HepG2 (cell line): ENCODE measurements at regions of chr2 and their contacts with region 1.

Region 1: GRCh38 chr2:181742922-181743722 is 62.8 kb upstream of the NEUROD1 start:
- DNase-seq: peak; percentile 66
- ATAC-seq: peak; percentile 68; the same call in 2 of the 3 replicates
- H3K4me3 ChIP-seq: no peak overlapping the region
- H3K27ac ChIP-seq: no peak overlapping the region
- H3K4me1 ChIP-seq: peaks cover 10% of the 10 kb centered on the region
- H3K27me3 ChIP-seq: no peaks in the 10 kb centered on the region
- CTCF ChIP-seq: peak; percentile 82
- EP300 ChIP-seq: peak in 1 of 2 experiments; percentile 25; a peak in 1 of 4 replicates
- POLR2A ChIP-seq: no peak
- RAD21 ChIP-seq: peak; percentile 73

Region 2: DNA sequence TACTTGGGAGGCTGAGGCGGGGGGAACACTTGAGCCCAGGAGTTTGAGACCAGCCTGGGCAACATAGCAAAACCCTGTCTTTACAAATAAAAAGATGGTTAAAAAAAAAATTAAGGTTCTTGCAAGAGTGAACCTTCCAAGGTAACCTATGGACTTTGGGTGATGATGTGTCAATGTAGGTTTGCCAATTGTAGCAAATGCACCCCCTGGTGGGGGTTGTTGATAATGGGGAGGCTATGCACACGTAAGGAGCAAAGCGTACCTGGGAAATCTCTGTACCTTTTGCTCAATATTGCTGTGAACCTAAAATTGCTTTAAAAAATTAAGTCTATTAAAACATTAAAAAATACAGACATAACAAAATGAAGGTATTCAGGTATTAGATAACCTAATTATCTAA is 1806.5 kb before region 1 on chr2:
- CTCF ChIA-PET with region 1: no interaction called
- POLR2A ChIA-PET with region 1: no interaction called
- in situ Hi-C with region 1: no loop called
- intact Hi-C with region 1: no loop called
- DNase-seq: peak; percentile 74
- ATAC-seq: peak; percentile 91
- H3K4me3 ChIP-seq: no peak overlapping the region
- H3K27ac ChIP-seq: no peak overlapping the region
- H3K4me1 ChIP-seq: peaks cover 4% of the 10 kb centered on the region
- H3K27me3 ChIP-seq: no peaks in the 10 kb centered on the region
- CTCF ChIP-seq: peak; percentile 71
- EP300 ChIP-seq: no peak
- POLR2A ChIP-seq: no peak
- RAD21 ChIP-seq: peak; percentile 35; the same call in 1 of the 2 replicates

Region 3: DNA sequence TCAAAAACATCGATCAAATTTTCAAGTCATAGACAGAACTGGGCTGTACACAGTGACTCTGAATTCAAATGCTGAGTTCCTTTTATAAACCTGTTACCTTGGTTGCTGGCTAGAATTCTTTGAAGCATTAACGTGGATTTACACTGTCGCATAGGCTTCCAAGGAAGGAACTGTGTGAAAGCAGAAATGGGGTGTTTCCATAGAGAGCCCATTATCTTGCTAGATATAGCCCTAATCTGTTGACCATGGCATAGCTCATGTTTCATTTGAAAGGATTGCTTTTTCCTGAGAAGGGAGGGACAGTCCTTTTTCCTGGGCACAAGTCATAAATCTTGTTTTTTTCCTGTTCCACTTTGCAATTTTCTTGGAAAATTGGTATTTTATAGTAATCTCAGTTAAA is 11.0 kb after region 1 on chr2:
- CTCF ChIA-PET with region 1: no interaction called
- POLR2A ChIA-PET with region 1: no interaction called
- in situ Hi-C with region 1: no loop called
- intact Hi-C with region 1: no loop called
- DNase-seq: no peak
- ATAC-seq: no peak
- H3K4me3 ChIP-seq: no peak overlapping the region
- H3K27ac ChIP-seq: no peak overlapping the region
- H3K4me1 ChIP-seq: peaks cover 24% of the 10 kb centered on the region
- H3K27me3 ChIP-seq: no peaks in the 10 kb centered on the region; a peak in 2 of 5 replicates
- CTCF ChIP-seq: no peak
- EP300 ChIP-seq: no peak
- POLR2A ChIP-seq: no peak
- RAD21 ChIP-seq: no peak

Region 4: GRCh38 chr2:181790716-181791649 is 47.9 kb after region 1 on chr2:
- CTCF ChIA-PET with region 1: no interaction called
- POLR2A ChIA-PET with region 1: no interaction called
- in situ Hi-C with region 1: no loop called
- intact Hi-C with region 1: loop called (anchors 2 kb)
- DNase-seq: peak; percentile 88
- ATAC-seq: peak; percentile 96
- H3K4me3 ChIP-seq: peak overlapping the region; percentile 11 to 53 (median 31)
- H3K27ac ChIP-seq: peak overlapping the region; percentile 82
- H3K4me1 ChIP-seq: peaks cover 43% of the 10 kb centered on the region
- H3K27me3 ChIP-seq: no peaks in the 10 kb centered on the region
- CTCF ChIP-seq: no peak
- EP300 ChIP-seq: peak in 1 of 2 experiments; percentile 71; a peak in 2 of 4 replicates
- POLR2A ChIP-seq: no peak; a peak in 1 of 4 replicates
- RAD21 ChIP-seq: 0 out of 2 replicates have a peak, but pooled peaks have one; percentile 21

Region 5: DNA sequence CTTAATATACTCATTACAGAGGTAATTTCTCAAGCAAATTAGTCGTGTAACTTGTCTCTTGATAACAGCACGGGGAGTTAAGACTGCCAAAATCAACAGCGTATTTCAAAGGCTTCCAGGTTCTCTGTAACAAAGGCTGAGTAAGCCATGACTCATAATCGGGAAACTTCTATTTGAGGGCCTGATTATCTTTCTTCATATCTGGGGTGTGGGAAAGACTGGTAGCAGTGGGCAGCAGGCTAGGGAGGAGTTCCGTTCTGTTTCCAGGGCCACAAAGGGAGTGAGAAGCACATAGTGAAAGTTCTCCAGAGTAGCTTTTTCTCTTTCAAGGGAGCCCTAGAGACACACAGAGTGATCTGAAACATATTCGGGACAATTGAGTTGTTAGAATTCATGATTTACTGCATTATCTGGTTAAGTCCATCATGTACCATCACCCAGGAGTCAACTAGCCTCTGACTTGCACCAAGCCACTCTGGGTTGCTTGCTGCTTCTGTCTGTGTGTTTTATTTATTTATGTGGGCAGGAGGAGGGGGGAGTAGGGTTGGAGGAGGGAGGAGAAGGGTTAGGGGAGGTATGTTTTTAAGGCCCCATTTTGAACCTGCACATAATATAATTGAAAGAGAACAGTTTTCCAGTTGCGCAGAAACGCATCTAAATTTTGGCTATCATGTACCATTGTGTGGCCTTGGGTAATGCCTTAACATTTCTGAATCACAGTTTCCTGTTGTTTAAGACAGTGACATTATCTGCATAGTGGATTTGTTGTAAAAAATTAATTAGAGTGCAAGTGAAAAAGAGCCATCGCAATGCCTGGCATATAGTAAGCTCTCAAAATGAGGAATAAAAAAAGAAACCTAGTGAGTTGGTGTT is 67.9 kb after region 1 on chr2:
- CTCF ChIA-PET with region 1: no interaction called
- POLR2A ChIA-PET with region 1: no interaction called
- in situ Hi-C with region 1: no loop called
- intact Hi-C with region 1: loop called (anchors 5 kb)
- DNase-seq: peak; percentile 74
- ATAC-seq: peak; percentile 82
- H3K4me3 ChIP-seq: peak overlapping the region; percentile 4 to 19 (median 14); a peak in 1 of 6 replicates
- H3K27ac ChIP-seq: no peak overlapping the region
- H3K4me1 ChIP-seq: peaks cover 25% of the 10 kb centered on the region
- H3K27me3 ChIP-seq: no peaks in the 10 kb centered on the region
- CTCF ChIP-seq: no peak
- EP300 ChIP-seq: peak in 1 of 2 experiments; percentile 66; a peak in 2 of 4 replicates
- POLR2A ChIP-seq: no peak
- RAD21 ChIP-seq: no peak

Region 6: GRCh38 chr2:181823405-181823804 is 80.3 kb after region 1 on chr2:
- CTCF ChIA-PET with region 1: no interaction called
- POLR2A ChIA-PET with region 1: no interaction called
- in situ Hi-C with region 1: no loop called
- intact Hi-C with region 1: no loop called
- DNase-seq: no peak
- ATAC-seq: no peak
- H3K4me3 ChIP-seq: no peak overlapping the region
- H3K27ac ChIP-seq: no peak overlapping the region
- H3K4me1 ChIP-seq: peaks cover 6% of the 10 kb centered on the region; the same call in 1 of the 2 replicates
- H3K27me3 ChIP-seq: no peaks in the 10 kb centered on the region
- CTCF ChIP-seq: no peak
- EP300 ChIP-seq: no peak
- POLR2A ChIP-seq: no peak
- RAD21 ChIP-seq: no peak

Region 7: GRCh38 chr2:181904022-181904632 is 161.0 kb after region 1 on chr2:
- CTCF ChIA-PET with region 1: interaction called, 22 read pairs
- POLR2A ChIA-PET with region 1: no interaction called
- in situ Hi-C with region 1: no loop called
- intact Hi-C with region 1: loop called (anchors 1 kb)
- DNase-seq: peak; percentile 66
- ATAC-seq: peak; percentile 72
- H3K4me3 ChIP-seq: no peak overlapping the region
- H3K27ac ChIP-seq: no peak overlapping the region
- H3K4me1 ChIP-seq: peaks cover 47% of the 10 kb centered on the region
- H3K27me3 ChIP-seq: no peaks in the 10 kb centered on the region
- CTCF ChIP-seq: peak; percentile 63
- EP300 ChIP-seq: no peak
- POLR2A ChIP-seq: no peak
- RAD21 ChIP-seq: peak; percentile 31; the same call in 1 of the 2 replicates

Region 8: DNA sequence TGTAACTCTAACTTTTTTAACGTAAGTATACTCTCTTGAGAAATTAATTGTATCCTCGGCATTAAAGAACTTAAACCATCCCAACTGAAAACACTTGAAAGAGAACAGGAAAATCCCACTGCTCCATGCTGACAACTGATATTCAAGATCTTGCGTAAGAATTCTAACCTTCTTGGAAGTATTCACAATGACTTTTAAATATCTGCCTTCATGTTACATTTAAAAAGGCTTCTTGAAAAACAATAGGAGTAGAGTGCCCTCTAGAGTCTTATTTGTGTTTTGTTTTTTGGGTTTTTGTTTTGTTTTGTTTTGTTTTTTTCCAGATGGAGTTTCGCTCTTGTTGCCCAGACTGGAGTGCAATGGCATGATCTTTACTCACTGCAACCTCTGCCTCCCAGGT is 907.6 kb after region 1 on chr2:
- CTCF ChIA-PET with region 1: no interaction called
- POLR2A ChIA-PET with region 1: no interaction called
- in situ Hi-C with region 1: no loop called
- intact Hi-C with region 1: loop called (anchors 5 kb)
- DNase-seq: peak; percentile 28
- ATAC-seq: no peak
- H3K4me3 ChIP-seq: no peak overlapping the region
- H3K27ac ChIP-seq: no peak overlapping the region
- H3K4me1 ChIP-seq: no peaks in the 10 kb centered on the region
- H3K27me3 ChIP-seq: no peaks in the 10 kb centered on the region; a peak in 1 of 5 replicates
- CTCF ChIP-seq: peak; percentile 54
- EP300 ChIP-seq: no peak
- POLR2A ChIP-seq: no peak
- RAD21 ChIP-seq: peak; percentile 32; the same call in 1 of the 2 replicates